ENCODE measurements at regions of chr7 and their contacts with region 1.

Region 1: GRCh38 chr7:150685219-150686029 is at the start of gene GIMAP2:
- DNase-seq: no peak
- H3K4me3 Mint-ChIP-seq: peak within 1 kb of the TSS; percentile 99
- H3K27ac Mint-ChIP-seq: peak within 1 kb of the TSS; percentile 99
- H3K4me1 Mint-ChIP-seq: peaks cover 53% of the 10 kb centered on the region
- H3K27me3 Mint-ChIP-seq: no peaks in the 10 kb centered on the region
- total RNA-seq, gene GIMAP2: 29.3 and 30.5 TPM in 2 replicates

Region 2: DNA sequence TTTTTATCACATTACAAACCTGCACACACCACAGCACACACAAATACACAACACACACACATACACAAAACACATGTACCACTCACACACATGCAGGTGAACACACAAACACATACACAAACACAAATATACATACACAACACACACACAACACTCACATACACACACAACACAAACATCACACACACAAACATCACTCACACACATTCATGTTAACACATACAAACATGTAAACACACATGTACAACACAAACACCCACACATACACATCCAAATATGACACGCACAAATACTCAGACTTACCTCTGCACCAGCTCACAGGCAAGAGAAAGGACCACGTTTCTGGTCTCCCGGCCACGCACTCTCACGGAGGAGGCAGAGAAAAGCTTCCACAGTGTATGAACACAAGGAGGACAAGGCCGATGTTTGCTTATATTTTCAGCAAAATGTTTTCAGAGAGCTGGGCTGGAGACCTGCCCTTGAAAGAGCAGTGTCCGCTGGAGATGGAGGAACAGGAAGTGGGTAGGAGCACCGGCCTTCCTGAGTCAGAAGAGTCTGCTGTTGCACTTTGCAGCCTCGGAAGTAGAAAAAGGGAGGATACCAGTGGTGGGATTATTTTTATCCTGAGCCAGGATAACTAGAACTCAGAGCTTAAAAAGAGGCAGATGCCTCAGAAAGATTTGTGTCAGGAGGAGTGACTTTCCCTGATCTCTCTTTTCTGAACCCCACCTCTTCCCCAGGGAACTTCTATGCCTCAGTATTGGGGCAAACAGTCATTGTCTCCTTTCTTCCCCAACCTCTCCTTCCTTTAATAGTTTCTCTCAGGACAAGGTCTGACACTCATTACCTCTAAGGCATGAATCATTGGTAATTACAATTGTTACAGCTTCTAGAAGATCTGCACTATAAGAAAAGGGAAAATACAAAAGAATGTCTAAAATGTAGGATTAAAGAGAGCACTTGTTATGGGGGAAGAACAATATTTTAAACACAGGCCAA is 53.3 kb before region 1 on chr7 and contains the start of gene GIMAP6:
- intact Hi-C with region 1: loop called (anchors 2 kb)
- DNase-seq: no peak
- H3K4me3 Mint-ChIP-seq: peak within 1 kb of the TSS; percentile 90
- H3K27ac Mint-ChIP-seq: peak within 1 kb of the TSS; percentile 84
- H3K4me1 Mint-ChIP-seq: peaks cover 53% of the 10 kb centered on the region
- H3K27me3 Mint-ChIP-seq: no peaks in the 10 kb centered on the region
- total RNA-seq, gene GIMAP6: 25.8 and 29.4 TPM in 2 replicates

Region 3: GRCh38 chr7:150716368-150716767 is 30.9 kb after region 1 on chr7 and contains the start of gene GIMAP1:
- intact Hi-C with region 1: loop called (anchors 2 kb)
- DNase-seq: peak; percentile 48
- H3K4me3 Mint-ChIP-seq: peak within 1 kb of the TSS; percentile 94
- H3K27ac Mint-ChIP-seq: peak within 1 kb of the TSS; percentile 76
- H3K4me1 Mint-ChIP-seq: peaks cover 51% of the 10 kb centered on the region
- H3K27me3 Mint-ChIP-seq: no peaks in the 10 kb centered on the region
- total RNA-seq, gene GIMAP1: 3.9 and 4.5 TPM in 2 replicates

Region 4: GRCh38 chr7:150778738-150779301 is 93.4 kb after region 1 on chr7:
- intact Hi-C with region 1: no loop called
- DNase-seq: peak; percentile 55
- H3K4me3 Mint-ChIP-seq: no peak overlapping the region
- H3K27ac Mint-ChIP-seq: no peak overlapping the region
- H3K4me1 Mint-ChIP-seq: no peaks in the 10 kb centered on the region
- H3K27me3 Mint-ChIP-seq: peaks cover 27% of the 10 kb centered on the region

Region 5: GRCh38 chr7:151038951-151039849 is 353.8 kb after region 1 on chr7:
- intact Hi-C with region 1: no loop called
- DNase-seq: no peak
- H3K4me3 Mint-ChIP-seq: no peak overlapping the region
- H3K27ac Mint-ChIP-seq: peak overlapping the region; percentile 91
- H3K4me1 Mint-ChIP-seq: peaks cover 15% of the 10 kb centered on the region
- H3K27me3 Mint-ChIP-seq: no peaks in the 10 kb centered on the region